GM10248 (cell line): ENCODE measurements at regions of chr1 and their contacts with region 1.

Region 1: GRCh38 chr1:160830321-160831153 is 32.1 kb downstream of the CD244 start:
- DNase-seq: peak; percentile 65
- CTCF ChIP-seq: peak; percentile 72

Region 2: GRCh38 chr1:160795951-160796383 is 34.6 kb before region 1 on chr1 and contains the start of gene LY9:
- CTCF ChIA-PET with region 1: interaction called, 54 read pairs
- POLR2A ChIA-PET with region 1: no interaction called
- DNase-seq: peak; percentile 74
- CTCF ChIP-seq: no peak